ENCODE measurements at regions of chr15 and their contacts with region 1.

Region 1: GRCh38 chr15:44738340-44738984 is 2.1 kb downstream of the TRIM69 start:
- DNase-seq: no peak
- H3K4me3 ChIP-seq: no peak overlapping the region
- H3K27ac ChIP-seq: no peak overlapping the region
- H3K4me1 ChIP-seq: peaks cover 5% of the 10 kb centered on the region
- H3K27me3 ChIP-seq: no peaks in the 10 kb centered on the region
- CTCF ChIP-seq: peak; percentile 33 to 68 (median 48)
- POLR2A ChIP-seq: no peak

Region 2: GRCh38 chr15:44663409-44664308 is 74.8 kb before region 1 on chr15 and contains the start of gene SPG11:
- intact Hi-C with region 1: loop called (anchors 5 kb)
- DNase-seq: peak; percentile 98
- H3K4me3 ChIP-seq: peak within 1 kb of the TSS; percentile 99
- H3K27ac ChIP-seq: peak within 1 kb of the TSS; percentile 95 to 97
- H3K4me1 ChIP-seq: peaks cover 3% of the 10 kb centered on the region
- H3K27me3 ChIP-seq: no peaks in the 10 kb centered on the region
- CTCF ChIP-seq: peak; percentile 89 to 97 (median 92)
- POLR2A ChIP-seq: peak; percentile 66
- total RNA-seq, gene SPG11: 127 to 137 TPM

Measured in testis (tissue), 5 donors.